ENCODE measurements at regions of chr3 and their contacts with region 1.

Region 1: DNA sequence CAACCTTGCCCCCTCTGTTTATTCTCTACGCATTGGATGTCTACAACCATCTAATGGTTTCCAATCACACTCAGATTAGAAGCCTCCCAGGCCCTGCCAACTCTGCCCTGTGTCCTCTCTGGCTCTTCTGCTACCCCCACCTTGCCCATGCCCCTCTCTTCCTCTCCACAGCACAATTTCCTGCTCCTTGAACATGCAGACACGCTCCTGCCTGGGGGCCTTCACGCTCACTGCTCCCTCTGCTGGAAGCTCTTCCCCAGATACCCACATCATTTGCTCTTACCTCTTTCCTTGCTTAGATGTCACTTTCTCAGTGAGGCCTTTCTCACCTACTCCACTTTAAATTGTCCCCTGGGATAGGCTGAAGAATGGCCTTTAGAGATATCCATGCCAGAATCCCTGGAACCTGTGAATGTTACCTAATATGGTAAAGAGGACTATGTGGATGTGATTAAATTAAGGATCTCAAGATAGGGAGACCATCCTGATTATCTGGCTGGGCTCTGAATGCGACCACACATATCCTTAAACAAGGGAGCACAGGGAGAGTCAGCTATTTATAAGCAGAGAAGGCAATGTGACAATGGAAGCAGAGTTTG is 9.9 kb downstream of the KY start:
- DNase-seq: peak; percentile 63 to 80 (median 72)
- H3K4me3 ChIP-seq: no peak overlapping the region
- H3K27ac ChIP-seq: no peak overlapping the region
- H3K4me1 ChIP-seq: peaks cover 0 to 2% (median 0%) of the 10 kb centered on the region in 4 experiments
- H3K27me3 ChIP-seq: no peaks in the 10 kb centered on the region

Region 2: GRCh38 chr3:134618478-134619300 is 22.3 kb before region 1 on chr3:
- CTCF ChIA-PET with region 1: interaction called, 14 read pairs
- POLR2A ChIA-PET with region 1: no interaction called
- DNase-seq: no peak
- H3K4me3 ChIP-seq: no peak overlapping the region
- H3K27ac ChIP-seq: no peak overlapping the region
- H3K4me1 ChIP-seq: peaks cover 0 to 23% (median 6%) of the 10 kb centered on the region in 4 experiments
- H3K27me3 ChIP-seq: no peaks in the 10 kb centered on the region

Region 3: DNA sequence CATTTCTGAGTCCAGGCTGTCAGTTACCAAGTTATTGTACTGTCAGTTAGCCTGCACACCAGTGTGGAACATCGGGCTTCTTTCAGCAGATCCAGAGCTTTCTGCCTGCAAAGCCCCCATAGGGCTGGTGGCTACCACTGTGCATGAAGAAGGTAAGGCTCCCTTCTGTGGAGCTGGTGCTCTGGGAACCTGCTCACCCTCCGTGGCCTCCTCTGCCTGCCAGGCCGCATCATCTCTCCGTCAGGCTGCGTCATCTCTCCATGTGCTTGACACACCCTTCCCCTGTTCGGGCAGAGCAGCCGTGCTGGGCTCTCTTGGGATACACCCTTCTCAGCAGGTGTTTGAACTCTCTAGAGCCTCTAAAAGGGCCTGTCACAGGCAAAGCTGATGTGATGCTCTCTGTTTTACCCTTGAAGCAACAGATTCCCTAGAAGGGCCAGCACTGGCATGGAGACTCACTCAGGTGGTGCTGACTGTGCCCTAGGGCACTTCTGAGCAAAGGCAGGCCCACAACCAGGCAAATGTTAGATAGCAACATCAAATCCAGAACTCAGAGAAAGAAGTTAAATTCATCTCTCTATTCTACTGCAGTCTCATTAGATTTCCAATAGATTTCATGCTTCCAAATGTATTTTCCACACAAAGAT is 415.2 kb after region 1 on chr3:
- CTCF ChIA-PET with region 1: no interaction called
- POLR2A ChIA-PET with region 1: no interaction called
- DNase-seq: no peak
- H3K4me3 ChIP-seq: no peak overlapping the region
- H3K27ac ChIP-seq: no peak overlapping the region
- H3K4me1 ChIP-seq: no peaks in the 10 kb centered on the region
- H3K27me3 ChIP-seq: no peaks in the 10 kb centered on the region